Activated naive CD4-positive, alpha-beta T cell treated with anti-CD3 and anti-CD28 coated beads for 36 hours (primary cell): ENCODE measurements at regions of chr15 and their contacts with region 1.

Region 1: DNA sequence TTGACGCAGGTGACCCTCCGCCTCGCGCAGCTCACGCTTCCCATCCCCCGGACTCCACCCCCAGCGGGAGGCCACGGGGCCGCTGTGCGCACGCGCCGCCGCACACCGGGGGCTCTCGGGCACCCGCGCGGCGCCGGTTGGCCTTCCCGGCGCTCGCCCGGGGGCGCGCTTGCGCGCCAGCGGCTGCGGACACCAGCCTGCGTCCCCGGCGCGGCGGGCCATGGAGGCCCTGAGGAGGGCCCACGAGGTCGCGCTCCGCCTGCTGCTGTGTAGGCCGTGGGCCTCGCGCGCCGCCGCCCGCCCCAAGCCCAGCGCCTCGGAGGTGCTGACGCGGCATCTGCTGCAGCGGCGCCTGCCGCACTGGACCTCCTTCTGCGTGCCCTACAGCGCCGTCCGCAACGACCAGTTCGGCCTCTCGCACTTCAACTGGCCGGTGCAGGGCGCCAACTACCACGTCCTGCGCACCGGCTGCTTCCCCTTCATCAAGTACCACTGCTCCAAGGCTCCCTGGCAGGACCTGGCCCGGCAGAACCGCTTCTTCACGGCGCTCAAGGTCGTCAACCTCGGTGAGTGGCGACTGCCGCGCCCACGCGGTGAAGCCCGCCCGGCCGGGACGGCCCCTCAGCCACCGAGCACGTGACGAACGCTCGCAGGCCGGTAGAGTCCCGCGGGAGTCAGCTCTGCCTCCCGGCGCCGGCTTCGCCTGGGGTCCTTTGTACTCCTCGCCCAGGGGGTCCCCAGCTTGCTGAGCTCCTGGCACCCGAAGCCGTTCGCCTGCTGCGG is at the start of gene C15orf61:
- DNase-seq: peak; percentile 89
- H3K4me3 Mint-ChIP-seq: peak within 1 kb of the TSS; percentile 92
- H3K27ac Mint-ChIP-seq: peak within 1 kb of the TSS; percentile 95
- H3K4me1 Mint-ChIP-seq: peaks cover 23% of the 10 kb centered on the region
- H3K27me3 Mint-ChIP-seq: no peaks in the 10 kb centered on the region
- total RNA-seq, gene C15orf61: 6.2 to 7.2 TPM

Region 2: GRCh38 chr15:67456677-67457529 is 64.3 kb before region 1 on chr15:
- CTCF ChIA-PET with region 1: interaction called, 3 read pairs
- intact Hi-C with region 1: loop called (anchors 1 kb)
- DNase-seq: peak; percentile 91
- H3K4me3 Mint-ChIP-seq: no peak overlapping the region
- H3K27ac Mint-ChIP-seq: no peak overlapping the region
- H3K4me1 Mint-ChIP-seq: peaks cover 3% of the 10 kb centered on the region
- H3K27me3 Mint-ChIP-seq: no peaks in the 10 kb centered on the region

Region 3: GRCh38 chr15:67542420-67543347 is 21.5 kb after region 1 on chr15 and contains the start of gene MAP2K5:
- CTCF ChIA-PET with region 1: interaction called, 3 read pairs
- intact Hi-C with region 1: loop called (anchors 1 kb)
- DNase-seq: peak; percentile 84
- H3K4me3 Mint-ChIP-seq: peak within 1 kb of the TSS; percentile 91
- H3K27ac Mint-ChIP-seq: peak within 1 kb of the TSS; percentile 95
- H3K4me1 Mint-ChIP-seq: peaks cover 47% of the 10 kb centered on the region
- H3K27me3 Mint-ChIP-seq: no peaks in the 10 kb centered on the region
- total RNA-seq, gene MAP2K5: 15.4 to 20.6 TPM

Region 4: DNA sequence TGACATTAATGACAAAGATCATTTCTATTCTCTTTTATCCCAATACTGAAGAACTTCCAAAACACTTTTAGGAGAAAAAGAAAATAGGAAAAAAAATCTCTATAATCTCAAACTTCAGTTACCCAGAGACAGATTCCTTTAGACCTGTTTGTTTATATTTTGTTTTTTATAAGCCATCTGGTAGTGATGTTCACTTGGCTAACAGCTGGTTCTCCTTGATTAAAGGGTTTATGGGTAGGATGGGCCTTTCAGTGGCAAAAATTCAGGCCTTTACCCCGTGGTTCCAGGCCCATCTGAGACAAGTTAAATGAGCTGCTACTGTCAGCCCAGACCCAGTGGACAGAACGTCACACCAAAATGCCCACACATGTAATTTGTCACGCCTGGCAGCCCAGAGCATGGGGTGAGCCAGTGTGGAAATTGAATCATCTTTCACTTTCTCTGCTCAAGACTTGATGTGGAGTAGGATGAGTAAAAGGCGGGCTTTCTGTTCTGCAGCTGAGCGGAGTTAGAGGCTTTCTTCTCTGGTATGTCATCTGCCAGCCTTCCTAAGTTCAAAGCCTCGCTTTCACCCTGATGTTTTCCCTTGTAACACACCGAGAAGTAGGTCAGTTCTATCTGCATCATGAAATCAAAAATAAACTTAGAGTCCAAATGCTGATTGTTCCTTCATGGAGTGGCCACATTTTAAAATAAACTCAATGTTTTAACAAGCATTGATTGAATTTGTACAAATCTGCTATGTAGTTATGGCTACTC is 241.6 kb after region 1 on chr15:
- CTCF ChIA-PET with region 1: interaction called, 8 read pairs
- intact Hi-C with region 1: loop called (anchors 5 kb)
- DNase-seq: peak; percentile 83
- H3K4me3 Mint-ChIP-seq: no peak overlapping the region
- H3K27ac Mint-ChIP-seq: peak overlapping the region; percentile 28
- H3K4me1 Mint-ChIP-seq: peaks cover 61% of the 10 kb centered on the region
- H3K27me3 Mint-ChIP-seq: no peaks in the 10 kb centered on the region

Region 5: GRCh38 chr15:68229386-68230156 is 708.4 kb after region 1 on chr15 and contains the start of gene CLN6:
- CTCF ChIA-PET with region 1: no interaction called
- intact Hi-C with region 1: loop called (anchors 2 kb)
- DNase-seq: peak; percentile 75
- H3K4me3 Mint-ChIP-seq: peak within 1 kb of the TSS; percentile 85
- H3K27ac Mint-ChIP-seq: peak within 1 kb of the TSS; percentile 80
- H3K4me1 Mint-ChIP-seq: peaks cover 43% of the 10 kb centered on the region
- H3K27me3 Mint-ChIP-seq: no peaks in the 10 kb centered on the region
- total RNA-seq, gene CLN6: 30.5 to 34.2 TPM